PC-9 (cell line): ENCODE measurements at regions of chr19 and their contacts with region 1.

Region 1: GRCh38 chr19:9818734-9819589 is at the start of gene FBXL12:
- DNase-seq: peak; percentile 98 to 100
- H3K4me3 ChIP-seq: peak within 1 kb of the TSS; percentile 93
- H3K27ac ChIP-seq: peak within 1 kb of the TSS; percentile 82
- H3K4me1 ChIP-seq: peaks cover 15% of the 10 kb centered on the region
- H3K27me3 ChIP-seq: no peaks in the 10 kb centered on the region
- CTCF ChIP-seq: no peak
- total RNA-seq, gene FBXL12: 30.7 and 35.8 TPM in 2 replicates

Region 2: DNA sequence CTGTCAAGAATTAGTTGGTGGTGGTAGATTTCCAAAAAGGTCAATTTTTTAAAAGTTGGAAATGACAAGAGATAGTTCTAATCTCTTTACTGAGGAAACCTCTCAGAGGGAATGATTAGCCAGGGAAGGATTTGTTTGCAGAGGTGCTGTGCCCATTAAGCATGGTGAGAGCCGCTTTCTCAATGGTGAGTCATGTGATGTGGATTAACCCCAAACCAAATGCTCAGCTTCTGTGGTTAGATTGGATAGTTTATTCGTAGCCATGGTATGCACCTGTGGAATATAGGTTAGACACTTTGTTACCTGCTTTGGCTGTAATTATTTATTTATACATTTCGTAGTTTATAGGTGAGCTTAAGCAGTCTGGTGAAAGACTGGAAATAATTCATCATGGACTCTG is 1367.1 kb before region 1 on chr19:
- CTCF ChIA-PET with region 1: no interaction called
- POLR2A ChIA-PET with region 1: interaction called, 22 read pairs
- intact Hi-C with region 1: no loop called
- DNase-seq: peak; percentile 39 to 90
- H3K4me3 ChIP-seq: peak overlapping the region; percentile 3; the same call in 1 of the 2 replicates
- H3K27ac ChIP-seq: peak overlapping the region; percentile 10
- H3K4me1 ChIP-seq: peaks cover 46% of the 10 kb centered on the region
- H3K27me3 ChIP-seq: no peaks in the 10 kb centered on the region
- CTCF ChIP-seq: no peak

Region 3: GRCh38 chr19:9768175-9769112 is 50.5 kb before region 1 on chr19 and contains the start of gene ZNF846:
- CTCF ChIA-PET with region 1: no interaction called
- POLR2A ChIA-PET with region 1: interaction called, 4 read pairs
- intact Hi-C with region 1: loop called (anchors 1 kb)
- DNase-seq: peak; percentile 94 to 96
- H3K4me3 ChIP-seq: peak within 1 kb of the TSS; percentile 78
- H3K27ac ChIP-seq: peak within 1 kb of the TSS; percentile 76
- H3K4me1 ChIP-seq: peaks cover 5% of the 10 kb centered on the region; the same call in 1 of the 2 replicates
- H3K27me3 ChIP-seq: no peaks in the 10 kb centered on the region
- CTCF ChIP-seq: no peak
- total RNA-seq, gene ZNF846: 8.3 and 9.6 TPM in 2 replicates

Region 4: GRCh38 chr19:9801976-9802375 is 17.0 kb before region 1 on chr19:
- CTCF ChIA-PET with region 1: no interaction called
- POLR2A ChIA-PET with region 1: no interaction called
- intact Hi-C with region 1: no loop called
- DNase-seq: no peak
- H3K4me3 ChIP-seq: no peak overlapping the region
- H3K27ac ChIP-seq: no peak overlapping the region
- H3K4me1 ChIP-seq: peaks cover 16% of the 10 kb centered on the region
- H3K27me3 ChIP-seq: no peaks in the 10 kb centered on the region
- CTCF ChIP-seq: no peak

Region 5: DNA sequence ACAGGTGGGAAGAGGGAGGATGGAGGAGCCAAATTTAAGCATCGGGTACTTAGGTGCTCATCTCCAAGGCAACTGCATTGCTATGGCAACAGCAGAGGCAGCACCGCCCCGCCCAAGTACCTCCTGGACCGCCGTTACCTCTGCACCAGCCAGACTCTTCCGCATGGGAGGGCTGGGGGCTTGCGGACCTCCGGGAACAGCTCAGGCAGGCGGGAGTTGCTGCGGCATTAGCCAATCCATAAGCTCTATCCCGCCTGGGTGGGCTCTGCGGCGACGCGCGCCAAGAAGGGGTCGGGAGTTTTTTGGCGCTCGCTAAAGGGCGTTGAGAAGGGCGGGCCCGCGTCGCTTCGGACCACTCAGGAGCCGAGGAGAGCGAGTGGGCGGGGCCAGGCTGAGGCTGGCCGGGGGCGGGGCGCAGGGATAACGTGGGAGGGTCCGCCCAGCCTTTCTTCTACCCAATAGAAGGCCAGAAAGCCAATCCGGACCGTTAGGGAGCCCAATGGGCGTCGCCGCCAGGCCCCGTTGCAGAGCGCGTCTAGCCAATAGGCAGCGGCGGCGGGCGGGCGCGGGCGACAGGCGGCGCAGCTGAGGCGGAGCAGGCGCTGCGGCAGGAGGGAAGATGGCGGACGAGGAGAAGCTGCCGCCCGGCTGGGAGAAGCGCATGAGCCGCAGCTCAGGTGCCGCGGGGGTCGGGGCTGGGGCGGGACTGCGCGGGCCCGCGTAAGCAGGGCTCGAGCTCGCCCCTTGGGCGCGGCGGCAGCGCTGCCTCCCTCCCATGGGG is 16.0 kb after region 1 on chr19 and contains the start of gene PIN1:
- CTCF ChIA-PET with region 1: no interaction called
- POLR2A ChIA-PET with region 1: interaction called, 14 read pairs
- intact Hi-C with region 1: no loop called
- DNase-seq: peak; percentile 96 to 98
- H3K4me3 ChIP-seq: peak within 1 kb of the TSS; percentile 96
- H3K27ac ChIP-seq: no peak within 1 kb of the TSS
- H3K4me1 ChIP-seq: peaks cover 10% of the 10 kb centered on the region
- H3K27me3 ChIP-seq: no peaks in the 10 kb centered on the region
- CTCF ChIP-seq: peak; percentile 59; the same call in 1 of the 2 replicates
- total RNA-seq, gene PIN1: 72.2 and 74.1 TPM in 2 replicates

Region 6: GRCh38 chr19:9901642-9902041 is 82.7 kb after region 1 on chr19:
- CTCF ChIA-PET with region 1: no interaction called
- POLR2A ChIA-PET with region 1: no interaction called
- intact Hi-C with region 1: no loop called
- DNase-seq: no peak
- H3K4me3 ChIP-seq: no peak overlapping the region
- H3K27ac ChIP-seq: no peak overlapping the region
- H3K4me1 ChIP-seq: no peaks in the 10 kb centered on the region
- H3K27me3 ChIP-seq: peaks cover 61% of the 10 kb centered on the region
- CTCF ChIP-seq: no peak

Region 7: GRCh38 chr19:10206226-10206885 is 387.4 kb after region 1 on chr19:
- CTCF ChIA-PET with region 1: no interaction called
- POLR2A ChIA-PET with region 1: interaction called, 27 read pairs
- intact Hi-C with region 1: no loop called
- DNase-seq: peak; percentile 89 to 91
- H3K4me3 ChIP-seq: no peak overlapping the region
- H3K27ac ChIP-seq: peak overlapping the region; percentile 67
- H3K4me1 ChIP-seq: peaks cover 45% of the 10 kb centered on the region
- H3K27me3 ChIP-seq: no peaks in the 10 kb centered on the region
- CTCF ChIP-seq: no peak